ENCODE measurements at regions of chr2 and their contacts with region 1.

Region 1: GRCh38 chr2:86298411-86299379 is 38.7 kb downstream of the REEP1 start:
- DNase-seq: no peak
- ATAC-seq: peak; percentile 58
- H3K4me3 ChIP-seq: no peak overlapping the region
- H3K27ac ChIP-seq: peak overlapping the region in 1 of 2 donors; percentile 74
- H3K4me1 ChIP-seq: no peaks in the 10 kb centered on the region
- H3K27me3 ChIP-seq: no peaks in the 10 kb centered on the region

Region 2: GRCh38 chr2:86368161-86368824 is 69.6 kb after region 1 on chr2:
- intact Hi-C with region 1: loop called in 1 of 2 experiments (anchors 10 kb)
- DNase-seq: peak in 1 of 2 donors; percentile 52
- ATAC-seq: peak; percentile 58
- H3K4me3 ChIP-seq: no peak overlapping the region
- H3K27ac ChIP-seq: no peak overlapping the region
- H3K4me1 ChIP-seq: no peaks in the 10 kb centered on the region
- H3K27me3 ChIP-seq: no peaks in the 10 kb centered on the region